PC-3 (cell line): ENCODE measurements at regions of chr7 and their contacts with region 1.

Region 1: DNA sequence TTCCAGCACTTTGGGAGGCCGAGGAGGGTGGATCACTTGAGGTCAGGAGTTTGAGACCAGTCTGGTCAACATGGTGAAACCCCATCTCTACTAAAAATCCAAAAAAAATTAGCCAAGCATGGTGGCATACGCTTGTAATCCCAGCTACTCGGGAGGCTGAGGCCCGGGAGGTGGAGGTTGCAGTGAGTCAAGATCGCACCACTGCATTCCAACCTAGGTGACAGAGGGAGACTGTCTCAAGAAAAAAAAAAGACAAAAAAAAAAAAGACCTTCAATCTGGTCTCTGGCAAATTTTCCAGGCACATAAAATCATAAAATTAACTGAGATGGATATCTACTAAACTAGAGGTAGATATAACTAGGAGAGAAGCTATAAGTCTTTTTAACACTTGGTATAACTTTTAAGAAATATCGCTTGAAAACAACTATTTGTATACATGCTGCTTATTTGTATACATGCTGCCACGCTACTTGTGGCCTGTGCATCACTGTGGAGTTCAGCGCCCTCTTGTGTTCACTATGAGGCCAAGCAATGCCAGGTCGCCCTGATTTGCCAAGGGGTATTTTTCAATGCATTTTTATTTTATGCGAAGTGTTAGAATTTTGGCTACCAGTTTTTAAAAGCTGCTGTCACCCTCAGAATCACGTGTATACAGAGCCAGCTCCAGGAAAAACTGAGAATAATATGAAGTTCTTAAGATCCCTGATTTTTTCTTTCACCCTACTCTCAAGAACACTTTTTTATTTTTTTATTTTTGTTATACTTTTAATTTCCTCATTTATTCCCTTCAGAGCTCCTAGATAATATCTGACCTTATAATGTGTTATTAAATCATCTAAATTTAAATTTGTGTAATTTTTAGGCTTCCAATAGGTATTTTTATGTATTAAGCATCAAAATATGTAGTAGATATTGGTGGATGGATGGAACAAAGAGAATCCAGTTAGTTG is 26.7 kb downstream of the CYCS start:
- DNase-seq: peak; percentile 76
- ATAC-seq: peak; percentile 80
- H3K4me3 ChIP-seq: peak overlapping the region; percentile 41; the same call in 1 of the 2 replicates
- H3K27ac ChIP-seq: no peak overlapping the region
- H3K4me1 ChIP-seq: no peaks in the 10 kb centered on the region
- H3K27me3 ChIP-seq: no peaks in the 10 kb centered on the region
- CTCF ChIP-seq: peak; percentile 93

Region 2: DNA sequence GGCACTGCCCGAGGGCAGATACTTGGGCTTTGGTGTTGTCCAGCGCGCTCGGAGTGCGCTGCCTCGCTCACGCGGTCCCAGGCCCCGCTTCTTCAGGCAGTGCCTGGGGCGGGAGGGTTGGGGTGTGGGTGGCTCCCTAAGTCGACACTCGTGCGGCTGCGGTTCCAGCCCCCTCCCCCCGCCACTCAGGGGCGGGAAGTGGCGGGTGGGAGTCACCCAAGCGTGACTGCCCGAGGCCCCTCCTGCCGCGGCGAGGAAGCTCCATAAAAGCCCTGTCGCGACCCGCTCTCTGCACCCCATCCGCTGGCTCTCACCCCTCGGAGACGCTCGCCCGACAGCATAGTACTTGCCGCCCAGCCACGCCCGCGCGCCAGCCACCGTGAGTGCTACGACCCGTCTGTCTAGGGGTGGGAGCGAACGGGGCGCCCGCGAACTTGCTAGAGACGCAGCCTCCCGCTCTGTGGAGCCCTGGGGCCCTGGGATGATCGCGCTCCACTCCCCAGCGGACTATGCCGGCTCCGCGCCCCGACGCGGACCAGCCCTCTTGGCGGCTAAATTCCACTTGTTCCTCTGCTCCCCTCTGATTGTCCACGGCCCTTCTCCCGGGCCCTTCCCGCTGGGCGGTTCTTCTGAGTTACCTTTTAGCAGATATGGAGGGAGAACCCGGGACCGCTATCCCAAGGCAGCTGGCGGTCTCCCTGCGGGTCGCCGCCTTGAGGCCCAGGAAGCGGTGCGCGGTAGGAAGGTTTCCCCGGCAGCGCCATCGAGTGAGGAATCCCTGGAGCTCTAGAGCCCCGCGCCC is 814.3 kb before region 1 on chr7 and contains the start of gene NPY:
- CTCF ChIA-PET with region 1: no interaction called
- POLR2A ChIA-PET with region 1: no interaction called
- intact Hi-C with region 1: loop called (anchors 5 kb)
- DNase-seq: no peak
- ATAC-seq: no peak
- H3K4me3 ChIP-seq: no peak within 1 kb of the TSS
- H3K27ac ChIP-seq: no peak within 1 kb of the TSS
- H3K4me1 ChIP-seq: no peaks in the 10 kb centered on the region
- H3K27me3 ChIP-seq: peaks cover 76% of the 10 kb centered on the region
- CTCF ChIP-seq: no peak
- total RNA-seq, gene NPY: not detected in 2 replicates

Region 3: DNA sequence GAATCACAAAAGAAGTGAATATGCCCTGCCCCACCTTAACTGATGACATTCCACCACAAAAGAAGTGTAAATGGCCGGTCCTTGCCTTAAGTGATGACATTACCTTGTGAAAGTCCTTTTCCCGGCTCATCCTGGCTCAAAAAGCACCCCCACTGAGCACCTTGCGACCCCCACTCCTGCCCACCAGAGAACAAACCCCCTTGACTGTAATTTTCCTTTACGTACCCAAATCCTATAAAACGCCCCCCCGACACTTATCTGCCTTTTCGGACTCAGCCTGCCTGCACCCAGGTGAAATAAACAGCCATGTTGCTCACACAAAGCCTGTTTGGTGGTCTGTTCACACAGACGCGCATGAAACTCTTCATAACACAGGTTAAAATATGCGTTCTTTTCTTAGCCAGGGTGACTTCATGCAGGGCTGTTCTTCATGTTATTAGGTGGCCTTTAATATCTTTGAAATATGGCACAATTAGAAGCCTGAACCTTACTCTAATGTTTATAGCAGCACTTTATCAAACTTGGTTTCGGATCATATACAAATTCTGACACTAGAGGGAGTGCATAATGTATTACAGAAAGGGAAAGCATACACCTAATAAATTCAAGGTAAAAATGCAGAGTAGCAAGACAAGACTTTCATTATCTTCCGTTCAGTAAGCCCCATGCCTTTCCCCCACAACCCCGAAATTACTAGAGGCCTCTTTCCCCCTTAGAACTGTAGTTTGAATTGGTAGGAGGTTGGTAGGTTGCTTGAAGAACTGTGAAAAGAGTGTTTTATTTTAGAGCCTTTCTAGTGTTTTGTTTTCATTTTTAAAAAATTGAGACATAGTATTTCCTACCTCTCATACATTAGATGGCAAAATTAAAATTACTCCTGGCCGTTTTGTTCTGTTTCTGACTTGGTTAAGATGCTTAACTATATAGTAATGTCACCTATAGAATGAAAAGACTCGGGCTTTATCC is 696.5 kb before region 1 on chr7:
- CTCF ChIA-PET with region 1: interaction called, 3 read pairs
- POLR2A ChIA-PET with region 1: no interaction called
- intact Hi-C with region 1: loop called (anchors 1 kb)
- DNase-seq: peak; percentile 65
- ATAC-seq: peak; percentile 87
- H3K4me3 ChIP-seq: peak overlapping the region; percentile 61
- H3K27ac ChIP-seq: no peak overlapping the region
- H3K4me1 ChIP-seq: 0 out of 2 replicates have a peak, but pooled peaks cover 5% of the 10 kb centered on the region
- H3K27me3 ChIP-seq: peaks cover 9% of the 10 kb centered on the region; the same call in 1 of the 2 replicates
- CTCF ChIP-seq: peak; percentile 68

Region 4: GRCh38 chr7:24812310-24812945 is 285.9 kb before region 1 on chr7:
- CTCF ChIA-PET with region 1: interaction called, 38 read pairs
- POLR2A ChIA-PET with region 1: no interaction called
- intact Hi-C with region 1: loop called (anchors 1 kb)
- DNase-seq: peak; percentile 67
- ATAC-seq: peak; percentile 93
- H3K4me3 ChIP-seq: no peak overlapping the region
- H3K27ac ChIP-seq: no peak overlapping the region
- H3K4me1 ChIP-seq: no peaks in the 10 kb centered on the region
- H3K27me3 ChIP-seq: no peaks in the 10 kb centered on the region
- CTCF ChIP-seq: peak; percentile 90

Region 5: GRCh38 chr7:25167262-25167843 is 69.0 kb after region 1 on chr7:
- CTCF ChIA-PET with region 1: no interaction called
- POLR2A ChIA-PET with region 1: no interaction called
- intact Hi-C with region 1: loop called (anchors 5 kb)
- DNase-seq: no peak
- ATAC-seq: no peak
- H3K4me3 ChIP-seq: no peak overlapping the region
- H3K27ac ChIP-seq: no peak overlapping the region
- H3K4me1 ChIP-seq: no peaks in the 10 kb centered on the region
- H3K27me3 ChIP-seq: no peaks in the 10 kb centered on the region
- CTCF ChIP-seq: no peak

Region 6: GRCh38 chr7:25968205-25968993 is 870.0 kb after region 1 on chr7:
- CTCF ChIA-PET with region 1: no interaction called
- POLR2A ChIA-PET with region 1: no interaction called
- intact Hi-C with region 1: no loop called
- DNase-seq: no peak
- ATAC-seq: no peak
- H3K4me3 ChIP-seq: no peak overlapping the region
- H3K27ac ChIP-seq: no peak overlapping the region
- H3K4me1 ChIP-seq: peaks cover 9% of the 10 kb centered on the region; the same call in 1 of the 2 replicates
- H3K27me3 ChIP-seq: peaks cover 75% of the 10 kb centered on the region
- CTCF ChIP-seq: no peak